ENCODE measurements at regions of chr16 and their contacts with region 1.

Region 1: DNA sequence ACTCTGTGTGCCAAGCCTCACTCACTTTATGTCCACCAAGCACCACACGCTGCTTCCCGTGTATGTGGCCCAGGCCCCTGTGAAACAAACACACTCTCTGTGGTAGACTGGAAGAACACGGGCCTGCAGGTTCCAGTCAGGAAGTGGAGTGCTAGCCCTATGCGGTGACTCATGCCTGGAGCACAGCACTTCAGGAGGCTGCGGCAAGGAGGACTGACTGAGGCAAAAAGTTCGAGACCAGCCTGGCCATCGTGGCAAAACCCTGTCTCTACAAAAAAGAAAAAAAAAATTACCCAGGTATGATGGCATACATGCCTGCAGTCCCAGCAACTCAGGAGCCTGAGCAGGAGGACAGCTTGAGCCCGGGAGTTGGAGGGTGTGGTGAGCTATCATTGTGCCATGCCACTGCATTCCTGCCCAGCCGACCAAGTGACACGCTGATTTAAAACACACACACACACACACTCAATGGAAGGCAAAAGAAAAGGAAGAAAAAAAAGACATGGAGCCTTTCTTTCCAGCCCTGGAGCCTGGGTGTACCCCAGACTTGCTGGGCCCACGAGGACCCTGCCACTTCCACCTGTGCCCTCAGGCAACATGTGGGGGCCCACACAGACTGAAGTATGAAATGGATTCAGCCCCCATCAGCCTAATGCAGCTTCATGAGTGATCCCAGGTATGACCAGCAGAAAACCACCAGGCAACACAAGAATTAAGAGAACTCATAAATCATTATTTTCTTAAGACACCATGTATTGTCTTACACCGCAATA is 126.6 kb downstream of the ANKRD11 start:
- DNase-seq: no peak
- ATAC-seq: no peak
- H3K4me3 ChIP-seq: no peak overlapping the region
- H3K4me3 Mint-ChIP-seq: peak overlapping the region; percentile 13
- H3K27ac ChIP-seq: no peak overlapping the region
- H3K27ac Mint-ChIP-seq: peak overlapping the region; percentile 37
- H3K4me1 ChIP-seq: peaks cover 73 to 80% of the 10 kb centered on the region in 2 donors
- H3K4me1 Mint-ChIP-seq: peaks cover 91% of the 10 kb centered on the region
- H3K27me3 ChIP-seq: no peaks in the 10 kb centered on the region
- H3K27me3 Mint-ChIP-seq: no peaks in the 10 kb centered on the region
- CTCF ChIP-seq: no peak

Region 2: GRCh38 chr16:89314357-89314756 is 49.5 kb before region 1 on chr16:
- CTCF ChIA-PET with region 1: no interaction called
- POLR2A ChIA-PET with region 1: no interaction called
- intact Hi-C with region 1: loop called (anchors 5 kb)
- DNase-seq: no peak
- ATAC-seq: no peak
- H3K4me3 ChIP-seq: no peak overlapping the region
- H3K4me3 Mint-ChIP-seq: peak overlapping the region; percentile 27
- H3K27ac ChIP-seq: no peak overlapping the region
- H3K27ac Mint-ChIP-seq: peak overlapping the region; percentile 57
- H3K4me1 ChIP-seq: peaks cover 28 to 47% of the 10 kb centered on the region in 2 donors
- H3K4me1 Mint-ChIP-seq: peaks cover 76% of the 10 kb centered on the region
- H3K27me3 ChIP-seq: no peaks in the 10 kb centered on the region
- H3K27me3 Mint-ChIP-seq: no peaks in the 10 kb centered on the region
- CTCF ChIP-seq: no peak

Region 3: GRCh38 chr16:89374393-89374960 is 10.7 kb after region 1 on chr16:
- CTCF ChIA-PET with region 1: interaction called, 4 read pairs
- POLR2A ChIA-PET with region 1: interaction called, 8 read pairs
- intact Hi-C with region 1: loop called (anchors 2 kb)
- DNase-seq: peak; percentile 64
- ATAC-seq: peak; percentile 44
- H3K4me3 ChIP-seq: peak overlapping the region in 1 of 5 experiments; percentile 39
- H3K4me3 Mint-ChIP-seq: peak overlapping the region; percentile 85
- H3K27ac ChIP-seq: peak overlapping the region in 1 of 2 donors; percentile 10
- H3K27ac Mint-ChIP-seq: peak overlapping the region; percentile 82
- H3K4me1 ChIP-seq: peaks cover 31 to 51% of the 10 kb centered on the region in 2 donors
- H3K4me1 Mint-ChIP-seq: peaks cover 83% of the 10 kb centered on the region
- H3K27me3 ChIP-seq: no peaks in the 10 kb centered on the region
- H3K27me3 Mint-ChIP-seq: no peaks in the 10 kb centered on the region
- CTCF ChIP-seq: no peak

Region 4: DNA sequence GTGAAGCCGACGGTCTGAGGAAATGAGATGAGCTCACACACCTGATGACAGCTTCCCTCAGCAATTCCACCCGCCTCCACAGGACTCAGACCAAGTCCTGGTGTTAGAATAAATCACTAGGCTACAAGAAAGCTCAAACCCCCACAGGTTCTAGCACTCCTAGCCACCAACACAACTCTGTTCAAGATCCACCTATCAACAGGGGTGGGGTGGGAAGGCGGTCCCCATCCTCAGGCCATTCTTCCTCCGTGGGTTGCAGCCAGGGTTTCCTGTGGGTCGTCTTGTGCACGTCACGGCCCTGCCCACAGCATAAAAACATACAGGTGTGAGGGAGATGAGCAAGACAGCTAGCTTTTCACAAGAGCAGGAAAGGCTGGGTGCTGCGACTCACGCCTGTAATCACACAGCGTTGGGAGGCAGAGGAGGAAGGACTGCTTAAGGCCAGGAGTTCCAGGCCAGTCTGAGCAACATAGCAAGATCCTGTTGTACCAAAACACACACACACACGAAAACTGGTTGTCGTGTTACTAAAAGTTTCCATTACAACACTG is 45.4 kb after region 1 on chr16:
- CTCF ChIA-PET with region 1: no interaction called
- POLR2A ChIA-PET with region 1: no interaction called
- intact Hi-C with region 1: loop called (anchors 5 kb)
- DNase-seq: peak; percentile 69
- ATAC-seq: peak; percentile 69
- H3K4me3 ChIP-seq: no peak overlapping the region
- H3K4me3 Mint-ChIP-seq: peak overlapping the region; percentile 75
- H3K27ac ChIP-seq: peak overlapping the region in 1 of 2 donors; percentile 12
- H3K27ac Mint-ChIP-seq: peak overlapping the region; percentile 60
- H3K4me1 ChIP-seq: peaks cover 62 to 74% of the 10 kb centered on the region in 2 donors
- H3K4me1 Mint-ChIP-seq: peaks cover 77% of the 10 kb centered on the region
- H3K27me3 ChIP-seq: no peaks in the 10 kb centered on the region
- H3K27me3 Mint-ChIP-seq: no peaks in the 10 kb centered on the region
- CTCF ChIP-seq: no peak

Region 5: GRCh38 chr16:89593841-89594240 is 230.0 kb after region 1 on chr16:
- CTCF ChIA-PET with region 1: no interaction called
- POLR2A ChIA-PET with region 1: no interaction called
- intact Hi-C with region 1: no loop called
- DNase-seq: no peak
- ATAC-seq: no peak
- H3K4me3 ChIP-seq: no peak overlapping the region
- H3K4me3 Mint-ChIP-seq: no peak overlapping the region
- H3K27ac ChIP-seq: no peak overlapping the region
- H3K27ac Mint-ChIP-seq: no peak overlapping the region
- H3K4me1 ChIP-seq: no peaks in the 10 kb centered on the region
- H3K4me1 Mint-ChIP-seq: no peaks in the 10 kb centered on the region
- H3K27me3 ChIP-seq: no peaks in the 10 kb centered on the region
- H3K27me3 Mint-ChIP-seq: no peaks in the 10 kb centered on the region
- CTCF ChIP-seq: no peak

Measured in B cell (primary cell).